ENCODE measurements at regions of chr1 and their contacts with region 1.

Region 1: GRCh38 chr1:25616095-25616986 is at the start of gene MAN1C1:
- DNase-seq: peak; percentile 69 to 95 (median 81)
- ATAC-seq: peak; percentile 56
- H3K4me3 ChIP-seq: peak within 1 kb of the TSS; percentile 73
- H3K4me3 Mint-ChIP-seq: peak within 1 kb of the TSS; percentile 90
- H3K27ac ChIP-seq: peak within 1 kb of the TSS; percentile 27 to 84
- H3K27ac Mint-ChIP-seq: peak within 1 kb of the TSS; percentile 93
- H3K4me1 ChIP-seq: peaks cover 55% of the 10 kb centered on the region
- H3K4me1 Mint-ChIP-seq: peaks cover 50% of the 10 kb centered on the region
- H3K27me3 ChIP-seq: no peaks in the 10 kb centered on the region
- H3K27me3 Mint-ChIP-seq: no peaks in the 10 kb centered on the region
- CTCF ChIP-seq: peak; percentile 49
- total RNA-seq, gene MAN1C1: 44.4 to 46.9 TPM

Region 2: GRCh38 chr1:25543425-25544242 is 72.7 kb before region 1 on chr1 and contains the start of gene LDLRAP1:
- CTCF ChIA-PET with region 1: interaction called, 5 read pairs
- POLR2A ChIA-PET with region 1: no interaction called
- intact Hi-C with region 1: loop called in 1 of 2 experiments (anchors 5 kb)
- DNase-seq: peak in 12 of 14 experiments; percentile 28 to 81 (median 56)
- ATAC-seq: peak; percentile 71
- H3K4me3 ChIP-seq: peak within 1 kb of the TSS; percentile 90
- H3K4me3 Mint-ChIP-seq: peak within 1 kb of the TSS; percentile 96
- H3K27ac ChIP-seq: peak within 1 kb of the TSS; percentile 55 to 60
- H3K27ac Mint-ChIP-seq: peak within 1 kb of the TSS; percentile 87
- H3K4me1 ChIP-seq: peaks cover 50% of the 10 kb centered on the region
- H3K4me1 Mint-ChIP-seq: peaks cover 47% of the 10 kb centered on the region
- H3K27me3 ChIP-seq: no peaks in the 10 kb centered on the region
- H3K27me3 Mint-ChIP-seq: no peaks in the 10 kb centered on the region
- CTCF ChIP-seq: no peak
- total RNA-seq, gene LDLRAP1: 70.5 to 73.5 TPM

Region 3: DNA sequence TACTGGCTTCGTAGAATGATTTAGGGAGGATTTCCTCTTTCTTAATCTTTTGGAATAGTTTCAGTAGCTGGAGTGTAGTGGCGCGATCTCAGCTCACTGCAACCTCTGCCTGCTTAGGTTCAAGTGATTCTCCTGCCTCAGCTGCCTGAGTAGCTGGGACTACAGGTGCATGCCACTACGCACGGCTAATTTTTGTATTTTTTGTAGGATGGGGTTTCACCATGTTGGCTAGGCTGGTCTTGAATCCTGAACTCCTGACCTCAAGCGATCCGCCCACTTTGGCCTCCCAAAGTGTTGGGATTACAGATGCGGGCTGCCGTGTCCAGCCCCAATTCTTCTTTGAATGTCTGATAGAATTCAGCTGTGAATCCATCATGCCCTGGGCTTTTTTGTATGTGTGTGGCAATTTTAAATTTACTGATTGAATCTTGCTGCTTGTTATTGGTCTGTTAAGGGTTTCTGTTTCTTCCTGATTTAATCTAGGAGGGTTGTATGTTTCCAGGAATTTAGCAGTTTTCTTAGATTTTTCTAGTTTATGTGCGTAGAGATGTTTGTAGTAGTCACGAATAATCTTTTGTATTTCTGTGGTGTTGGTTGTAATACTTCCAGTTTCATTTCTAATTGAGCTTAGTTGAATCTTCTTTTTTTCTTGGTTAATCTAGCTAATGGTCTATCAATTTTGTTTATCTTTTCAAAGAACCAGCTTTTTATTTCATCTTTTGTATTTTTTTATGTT is 15.6 kb after region 1 on chr1:
- CTCF ChIA-PET with region 1: interaction called, 23 read pairs
- POLR2A ChIA-PET with region 1: interaction called, 17 read pairs
- intact Hi-C with region 1: no loop called
- DNase-seq: peak in 1 of 14 experiments; percentile 38
- ATAC-seq: peak; percentile 16
- H3K4me3 ChIP-seq: peak overlapping the region; percentile 46
- H3K4me3 Mint-ChIP-seq: peak overlapping the region; percentile 87
- H3K27ac ChIP-seq: peak overlapping the region; percentile 57 to 63
- H3K27ac Mint-ChIP-seq: peak overlapping the region; percentile 88
- H3K4me1 ChIP-seq: peaks cover 26% of the 10 kb centered on the region
- H3K4me1 Mint-ChIP-seq: peaks cover 86% of the 10 kb centered on the region
- H3K27me3 ChIP-seq: no peaks in the 10 kb centered on the region
- H3K27me3 Mint-ChIP-seq: no peaks in the 10 kb centered on the region
- CTCF ChIP-seq: no peak

Region 4: DNA sequence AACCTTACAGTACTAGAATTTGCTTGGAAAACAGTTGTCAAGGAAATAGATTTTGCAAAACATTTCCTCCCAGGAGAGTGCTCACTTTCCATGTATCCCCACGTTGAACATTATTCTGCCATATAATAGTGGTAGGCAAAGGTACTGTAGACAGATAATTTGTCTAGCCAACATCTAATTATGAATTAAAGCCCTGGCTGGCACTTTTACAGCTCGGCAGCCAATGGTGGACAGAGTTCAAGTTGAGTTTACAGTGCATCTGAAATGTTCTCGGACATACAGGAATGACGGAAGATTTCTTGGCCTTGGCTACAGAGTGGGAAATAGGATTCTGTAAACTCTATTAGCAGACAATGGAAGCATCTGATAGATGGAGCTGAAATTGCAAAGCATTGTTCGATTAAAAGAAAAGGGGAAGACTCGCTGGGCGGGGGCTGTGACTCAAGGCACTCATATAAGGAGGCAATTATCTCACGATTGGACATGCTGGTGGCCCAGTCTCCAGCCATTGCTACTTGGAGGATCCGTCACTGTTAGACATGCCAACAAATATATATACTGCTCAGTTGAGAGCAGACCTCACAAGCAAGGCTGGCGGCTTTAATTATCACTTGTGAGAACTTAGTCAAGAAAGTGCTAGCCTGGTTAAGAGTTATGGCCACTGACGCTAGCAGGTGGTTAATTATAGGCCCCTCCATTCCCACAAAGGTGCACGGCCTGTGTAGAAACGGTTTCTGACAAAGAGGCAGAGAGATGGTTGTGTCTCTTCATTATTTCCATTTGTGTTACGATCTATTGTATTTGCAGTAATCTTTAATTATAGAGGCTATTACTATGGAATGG is 48.2 kb after region 1 on chr1:
- CTCF ChIA-PET with region 1: interaction called, 15 read pairs
- POLR2A ChIA-PET with region 1: interaction called, 11 read pairs
- intact Hi-C with region 1: loop called in 1 of 2 experiments (anchors 5 kb)
- DNase-seq: no peak
- ATAC-seq: no peak
- H3K4me3 ChIP-seq: no peak overlapping the region
- H3K4me3 Mint-ChIP-seq: no peak overlapping the region
- H3K27ac ChIP-seq: no peak overlapping the region
- H3K27ac Mint-ChIP-seq: peak overlapping the region; percentile 96
- H3K4me1 ChIP-seq: peaks cover 30% of the 10 kb centered on the region
- H3K4me1 Mint-ChIP-seq: peaks cover 87% of the 10 kb centered on the region
- H3K27me3 ChIP-seq: no peaks in the 10 kb centered on the region
- H3K27me3 Mint-ChIP-seq: no peaks in the 10 kb centered on the region
- CTCF ChIP-seq: no peak

Region 5: DNA sequence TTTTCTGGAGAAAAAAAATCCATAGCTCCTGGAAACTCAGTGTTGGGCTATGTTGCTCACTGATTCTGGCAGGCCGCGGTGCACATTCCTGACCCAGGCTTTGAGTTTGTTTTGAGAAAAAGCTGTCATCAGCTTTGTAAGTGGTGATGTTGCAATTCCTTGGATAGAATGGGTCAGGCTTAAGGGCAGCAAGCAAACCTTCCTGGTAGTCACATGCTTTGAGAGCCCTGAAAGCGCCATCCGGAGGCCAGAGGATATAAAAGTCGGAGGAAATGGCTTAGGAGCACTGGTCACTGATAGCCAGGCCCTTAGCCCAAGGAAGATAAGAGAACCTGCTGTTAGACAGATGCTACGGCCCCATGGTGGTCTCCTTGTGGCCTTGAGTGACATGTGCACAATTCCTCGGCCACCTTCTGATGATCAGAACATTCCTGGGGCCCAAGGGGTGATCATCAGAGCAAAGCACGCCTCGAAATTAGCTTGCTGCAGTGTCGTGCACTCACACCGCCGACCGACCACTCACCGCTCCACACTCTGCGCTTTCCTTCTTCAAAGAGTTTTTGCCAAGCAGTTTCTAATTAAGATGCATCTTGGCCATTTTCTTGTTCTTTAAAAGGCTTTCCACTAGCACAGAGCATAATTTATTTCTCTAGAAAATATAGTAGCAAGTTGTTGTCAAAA is 78.9 kb after region 1 on chr1:
- CTCF ChIA-PET with region 1: interaction called, 6 read pairs
- POLR2A ChIA-PET with region 1: interaction called, 7 read pairs
- intact Hi-C with region 1: loop called (anchors 5 kb)
- DNase-seq: no peak
- ATAC-seq: no peak
- H3K4me3 ChIP-seq: no peak overlapping the region
- H3K4me3 Mint-ChIP-seq: no peak overlapping the region
- H3K27ac ChIP-seq: peak overlapping the region in 1 of 2 donors; percentile 39
- H3K27ac Mint-ChIP-seq: peak overlapping the region; percentile 74
- H3K4me1 ChIP-seq: peaks cover 48% of the 10 kb centered on the region
- H3K4me1 Mint-ChIP-seq: peaks cover 73% of the 10 kb centered on the region
- H3K27me3 ChIP-seq: no peaks in the 10 kb centered on the region
- H3K27me3 Mint-ChIP-seq: no peaks in the 10 kb centered on the region
- CTCF ChIP-seq: no peak

Region 6: GRCh38 chr1:25837262-25837875 is 221.0 kb after region 1 on chr1:
- CTCF ChIA-PET with region 1: no interaction called
- POLR2A ChIA-PET with region 1: no interaction called
- intact Hi-C with region 1: no loop called
- DNase-seq: peak in 1 of 14 experiments; percentile 8
- ATAC-seq: no peak
- H3K4me3 ChIP-seq: no peak overlapping the region
- H3K4me3 Mint-ChIP-seq: no peak overlapping the region
- H3K27ac ChIP-seq: no peak overlapping the region
- H3K27ac Mint-ChIP-seq: no peak overlapping the region
- H3K4me1 ChIP-seq: peaks cover under 1% of the 10 kb centered on the region
- H3K4me1 Mint-ChIP-seq: peaks cover 2% of the 10 kb centered on the region
- H3K27me3 ChIP-seq: no peaks in the 10 kb centered on the region
- H3K27me3 Mint-ChIP-seq: no peaks in the 10 kb centered on the region
- CTCF ChIP-seq: peak; percentile 42